Right ventricle myocardium inferior (tissue), 1 donor: ENCODE measurements at regions of chr3 and their contacts with region 1.

Region 1: DNA sequence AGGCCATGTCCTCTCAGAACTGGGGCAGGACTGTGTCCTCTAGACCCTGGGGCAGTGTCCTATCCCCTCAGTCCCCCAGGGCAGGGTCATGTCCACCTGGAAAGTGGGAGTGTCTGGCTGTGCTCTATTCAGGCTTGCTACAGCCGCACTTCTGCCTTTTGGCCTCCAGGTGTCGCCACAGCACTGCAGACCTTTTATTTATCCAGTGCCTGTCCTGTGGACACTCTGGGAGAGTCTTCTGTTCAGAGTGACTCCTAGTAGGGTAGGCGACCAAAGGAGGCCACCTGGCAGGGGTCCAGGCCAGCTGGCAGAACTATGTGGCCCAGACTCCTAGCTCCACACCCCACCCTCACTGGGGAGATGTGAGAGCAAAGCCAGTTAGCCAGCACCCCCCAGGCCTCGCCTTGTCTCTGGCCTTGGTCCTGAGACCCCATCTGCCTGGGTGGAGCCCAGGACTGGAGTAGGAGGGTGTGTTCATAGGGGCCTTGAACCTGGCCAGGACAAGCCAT is 3.9 kb downstream of the TMIE start:
- DNase-seq: peak; percentile 85
- ATAC-seq: peak; percentile 85

Region 2: GRCh38 chr3:46845791-46846623 is 140.9 kb after region 1 on chr3:
- intact Hi-C with region 1: loop called (anchors 5 kb)
- DNase-seq: peak; percentile 91
- ATAC-seq: peak; percentile 68

Region 3: GRCh38 chr3:46895204-46895660 is 190.2 kb after region 1 on chr3:
- intact Hi-C with region 1: loop called (anchors 1 kb)
- DNase-seq: peak; percentile 87
- ATAC-seq: peak; percentile 54

Region 4: GRCh38 chr3:46909535-46910442 is 204.7 kb after region 1 on chr3:
- intact Hi-C with region 1: loop called (anchors 1 kb)
- DNase-seq: peak; percentile 88
- ATAC-seq: peak; percentile 84

Region 5: DNA sequence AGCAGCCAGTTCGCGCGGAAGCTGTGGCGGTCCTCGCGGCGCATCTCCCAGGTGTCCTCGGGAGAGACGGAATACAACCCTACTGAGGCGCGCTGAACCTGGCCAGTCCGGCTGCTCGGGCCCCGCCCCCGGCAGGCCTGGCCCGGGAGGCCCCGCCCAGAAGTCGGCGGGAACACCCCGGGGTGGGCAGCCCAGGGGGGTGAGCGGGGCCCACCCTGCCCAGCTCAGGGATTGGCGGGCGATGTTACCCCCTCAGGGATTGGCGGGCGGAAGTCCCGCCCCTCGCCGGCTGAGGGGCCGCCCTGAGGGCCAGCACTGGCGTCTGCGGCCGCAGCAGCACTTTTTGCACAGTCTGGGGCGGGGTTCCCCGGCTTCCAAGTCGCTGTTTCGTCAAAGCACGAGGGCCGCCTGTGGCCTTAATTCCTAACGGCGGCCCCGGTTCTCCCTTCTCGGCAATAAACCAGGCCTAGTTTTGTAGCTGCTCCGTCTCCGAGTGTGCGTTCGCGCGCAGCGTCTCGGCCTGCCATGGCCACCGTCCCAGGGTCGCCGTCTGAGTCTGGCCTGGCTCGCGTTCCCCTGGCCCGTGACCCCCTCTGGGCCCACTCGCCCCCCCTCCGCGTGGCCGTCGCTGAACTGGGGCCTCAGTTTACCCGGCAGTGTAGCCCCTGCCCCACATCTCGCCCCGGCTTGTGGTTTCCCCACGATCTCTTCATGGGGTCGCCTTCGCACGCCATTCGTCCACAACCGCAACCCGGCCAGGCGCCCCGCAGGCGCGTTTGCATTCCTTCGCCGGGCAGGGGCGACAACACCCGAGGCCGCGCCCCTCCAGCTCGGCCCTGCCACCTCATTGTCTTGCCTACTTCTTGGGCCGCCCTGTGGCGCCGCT is 304.4 kb after region 1 on chr3:
- intact Hi-C with region 1: loop called (anchors 10 kb)
- DNase-seq: peak; percentile 92
- ATAC-seq: peak; percentile 96